Left cardiac atrium (tissue), 4 donors: ENCODE measurements at regions of chrX and their contacts with region 1.

Region 1: DNA sequence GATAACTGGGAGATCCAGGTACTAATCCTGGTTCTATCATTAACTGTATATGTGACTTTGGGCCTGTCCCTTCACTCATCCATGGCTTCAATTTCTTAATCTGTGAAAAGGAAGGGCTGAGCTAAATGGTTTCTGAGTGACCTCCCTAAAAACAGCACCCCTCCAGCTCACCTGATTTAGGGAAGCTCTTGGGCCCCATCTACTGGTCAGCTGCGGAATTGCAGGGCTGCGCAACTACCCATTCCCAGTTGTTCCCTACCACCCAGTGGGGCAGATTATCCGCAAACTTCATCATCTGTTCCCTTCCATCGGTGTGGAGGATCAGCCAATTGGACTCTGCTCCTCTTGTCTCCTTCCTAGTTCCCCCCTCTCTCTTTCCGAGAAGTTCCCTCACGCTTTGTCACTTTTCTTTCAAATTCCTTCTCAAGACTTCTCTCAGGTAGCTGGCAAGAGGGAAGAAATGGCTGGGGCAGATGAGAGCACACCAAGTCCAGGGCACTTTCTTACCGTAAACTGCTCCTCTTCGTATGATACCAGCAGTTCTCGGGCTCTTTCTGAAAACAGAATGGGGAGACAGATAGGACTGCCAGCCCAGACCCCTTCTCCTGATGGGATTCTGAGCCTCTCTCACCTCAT is 5.8 kb downstream of the LAS1L start:
- DNase-seq: peak; percentile 35
- ATAC-seq: peak; percentile 49 to 71

Region 2: DNA sequence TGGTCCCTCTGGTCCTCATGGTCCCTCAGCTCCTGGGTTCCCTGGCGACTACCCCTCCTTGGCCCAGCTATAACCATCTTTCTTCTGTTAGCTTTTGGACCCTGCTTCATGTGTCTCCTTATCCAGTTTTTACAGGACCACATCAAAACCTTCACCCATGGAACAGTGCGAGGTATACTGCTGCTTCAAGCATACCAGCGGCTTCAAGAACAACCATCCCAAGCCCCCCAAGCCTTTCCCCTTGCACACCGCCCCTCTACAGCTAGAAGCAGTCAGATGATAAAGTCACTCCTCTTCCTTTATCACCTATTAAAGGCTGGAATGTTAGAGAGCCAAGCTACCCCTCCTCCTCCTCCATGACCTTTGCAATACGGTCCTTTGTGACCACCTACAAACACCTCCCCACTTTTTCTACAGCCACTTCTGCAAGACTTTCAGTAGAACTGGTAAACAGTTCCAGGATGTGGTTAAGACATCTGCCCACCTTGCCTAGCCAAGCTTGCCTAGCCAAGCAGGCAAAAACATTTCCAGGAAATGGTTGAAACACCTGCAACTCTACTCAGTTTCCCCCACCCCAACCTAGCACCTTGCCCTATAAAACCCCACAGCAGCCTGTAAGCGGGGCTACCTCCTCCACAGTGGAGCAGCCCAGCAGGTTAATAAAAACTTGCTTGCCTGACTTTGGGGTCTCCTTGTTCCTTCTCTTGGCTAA is 678.3 kb before region 1 on chrX:
- intact Hi-C with region 1: no loop called
- DNase-seq: no peak
- ATAC-seq: no peak

Region 3: GRCh38 chrX:64908121-64908520 is 620.7 kb before region 1 on chrX:
- intact Hi-C with region 1: loop called in 1 of 2 experiments (anchors 10 kb)
- DNase-seq: no peak
- ATAC-seq: no peak